Heart left ventricle (tissue), 16 donors: ENCODE measurements at regions of chr15 and their contacts with region 1.

Region 1: GRCh38 chr15:49573421-49573820 is 47.2 kb downstream of the FAM227B start:
- DNase-seq: no peak
- ATAC-seq: no peak
- H3K4me3 ChIP-seq: no peak overlapping the region
- H3K27ac ChIP-seq: no peak overlapping the region
- H3K4me1 ChIP-seq: no peaks in the 10 kb centered on the region
- H3K27me3 ChIP-seq: no peaks in the 10 kb centered on the region
- CTCF ChIP-seq: no peak
- POLR2A ChIP-seq: no peak

Region 2: GRCh38 chr15:49620658-49621368 is 47.4 kb after region 1 on chr15 and contains the starts of genes DTWD1 and FAM227B:
- intact Hi-C with region 1: no loop called
- DNase-seq: peak; percentile 97 to 99 (median 98)
- ATAC-seq: peak; percentile 99 to 100 (median 100)
- H3K4me3 ChIP-seq: peak within 1 kb of the TSS; percentile 59 to 87 (median 74)
- H3K27ac ChIP-seq: peak within 1 kb of the TSS; percentile 78 to 97 (median 93)
- H3K4me1 ChIP-seq: peaks cover 0 to 40% (median 19%) of the 10 kb centered on the region in 12 donors
- H3K27me3 ChIP-seq: no peaks in the 10 kb centered on the region
- CTCF ChIP-seq: peak in 4 of 12 donors; percentile 14 to 25 (median 14)
- POLR2A ChIP-seq: peak in 1 of 2 donors; percentile 84
- total RNA-seq, gene DTWD1: 6.3 to 28.0 (median 18.4) TPM
- total RNA-seq, gene FAM227B: 6.1 to 18.8 (median 14.4) TPM

Region 3: DNA sequence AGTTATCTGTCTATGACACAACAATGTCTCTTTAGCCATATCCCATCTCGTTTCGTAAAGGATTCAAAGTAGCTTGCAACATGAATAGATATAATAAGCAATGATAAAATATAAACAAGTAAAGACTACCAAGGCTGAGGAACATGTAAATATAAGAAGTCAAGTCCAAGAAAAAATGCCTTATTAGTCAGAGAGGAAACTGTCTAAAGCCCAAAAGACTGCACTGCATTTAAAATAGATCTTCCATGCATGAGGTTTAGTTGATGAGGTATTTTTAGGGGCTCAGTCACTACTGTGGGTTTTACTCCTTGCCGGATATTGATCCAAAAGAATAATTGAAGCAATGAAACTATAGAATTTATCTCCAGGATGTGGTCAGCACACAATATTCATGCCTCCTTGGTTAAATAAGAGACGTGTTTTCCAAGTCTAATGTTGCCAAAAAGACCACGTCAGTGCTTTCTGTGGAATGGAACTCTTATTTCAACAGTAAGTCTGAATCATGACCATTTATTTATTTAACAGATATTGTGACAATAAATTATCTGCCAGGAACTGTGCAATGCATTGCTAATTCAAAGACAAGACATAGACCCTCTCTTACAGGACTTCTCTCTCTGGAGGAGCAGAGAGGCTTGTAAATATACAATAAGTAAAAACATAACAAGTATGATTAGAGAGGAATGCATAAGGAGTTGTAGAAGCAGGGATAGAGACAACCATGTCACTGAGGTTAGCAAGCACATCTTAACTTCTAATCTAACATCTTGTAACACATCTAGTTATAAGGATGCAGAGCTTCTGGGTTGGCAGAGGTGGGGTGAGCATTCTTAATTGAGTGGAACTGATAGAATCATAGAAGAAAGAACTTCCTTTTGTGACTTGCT is 274.8 kb after region 1 on chr15:
- intact Hi-C with region 1: loop called in 1 of 10 experiments (anchors 5 kb)
- DNase-seq: no peak
- ATAC-seq: peak in 1 of 4 donors; percentile 71
- H3K4me3 ChIP-seq: no peak overlapping the region
- H3K27ac ChIP-seq: peak overlapping the region in 8 of 12 donors; percentile 4 to 73 (median 38)
- H3K4me1 ChIP-seq: peaks cover 0 to 14% (median 0%) of the 10 kb centered on the region in 12 donors
- H3K27me3 ChIP-seq: no peaks in the 10 kb centered on the region
- CTCF ChIP-seq: no peak
- POLR2A ChIP-seq: no peak

Region 4: DNA sequence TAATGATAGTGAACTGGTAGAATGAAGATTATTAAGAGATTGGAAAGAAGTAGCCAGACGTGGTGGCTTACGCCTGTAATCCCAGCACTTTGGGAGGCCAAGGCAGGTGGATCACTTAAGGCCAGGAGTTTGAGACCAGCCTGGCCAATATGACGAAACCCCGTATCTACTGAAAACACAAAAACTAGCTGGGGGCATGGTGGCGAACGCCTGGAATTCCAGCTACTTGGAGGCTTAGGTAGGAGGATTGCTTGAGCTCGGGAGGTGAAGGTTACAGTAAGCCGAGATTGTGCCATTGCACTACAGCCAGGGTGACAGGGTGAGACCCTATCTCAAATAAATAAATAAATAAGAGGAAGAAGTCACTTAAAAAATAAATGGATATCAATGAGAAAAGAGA is 864.8 kb after region 1 on chr15:
- intact Hi-C with region 1: no loop called
- DNase-seq: no peak
- ATAC-seq: no peak
- H3K4me3 ChIP-seq: no peak overlapping the region
- H3K27ac ChIP-seq: no peak overlapping the region
- H3K4me1 ChIP-seq: peaks cover 0 to 18% (median 7%) of the 10 kb centered on the region in 12 donors
- H3K27me3 ChIP-seq: no peaks in the 10 kb centered on the region
- CTCF ChIP-seq: no peak
- POLR2A ChIP-seq: no peak